ENCODE measurements at regions of chr14 and their contacts with region 1.

Region 1: DNA sequence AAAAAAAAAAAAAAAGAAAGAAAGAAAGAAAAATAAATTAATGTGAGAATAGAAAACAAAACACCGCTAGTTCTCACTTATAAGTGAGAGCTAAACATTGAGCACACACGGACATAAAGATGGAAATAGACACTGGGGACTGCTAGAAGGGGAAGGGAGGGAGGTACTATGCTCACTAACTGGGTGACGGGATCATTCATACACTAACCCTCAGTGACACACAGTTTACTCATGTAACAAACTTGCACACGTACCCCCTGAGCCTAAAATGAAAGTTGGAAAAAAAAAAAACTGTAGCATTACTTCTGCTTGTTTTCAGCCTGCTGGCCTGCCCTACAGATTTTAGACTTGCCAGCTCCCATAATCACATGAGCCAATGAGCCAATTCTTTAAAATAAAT is 10.5 kb upstream of the PRMT5 start:
- DNase-seq: no peak
- H3K4me3 ChIP-seq: no peak overlapping the region
- CTCF ChIP-seq: no peak

Region 2: GRCh38 chr14:22955702-22956569 is 16.3 kb after region 1 on chr14:
- CTCF ChIA-PET with region 1: interaction called, 48 read pairs
- POLR2A ChIA-PET with region 1: interaction called, 7 read pairs
- DNase-seq: no peak
- H3K4me3 ChIP-seq: peak overlapping the region; percentile 66
- CTCF ChIP-seq: no peak

Measured in AG04449 (cell line).